ENCODE measurements at regions of chr2 and their contacts with region 1.

Region 1: GRCh38 chr2:11411768-11412448 is 54.1 kb downstream of the E2F6 start:
- DNase-seq: no peak
- H3K4me3 ChIP-seq: peak overlapping the region in 5 of 8 donors; percentile 8 to 64 (median 27)
- H3K27ac ChIP-seq: peak overlapping the region in 1 of 8 donors; percentile 28
- H3K4me1 ChIP-seq: peaks cover 0 to 18% (median 8%) of the 10 kb centered on the region in 6 donors
- H3K27me3 ChIP-seq: peaks cover 0 to 12% (median 0%) of the 10 kb centered on the region in 7 donors
- CTCF ChIP-seq: peak; percentile 38 to 79 (median 68)
- POLR2A ChIP-seq: no peak

Region 2: DNA sequence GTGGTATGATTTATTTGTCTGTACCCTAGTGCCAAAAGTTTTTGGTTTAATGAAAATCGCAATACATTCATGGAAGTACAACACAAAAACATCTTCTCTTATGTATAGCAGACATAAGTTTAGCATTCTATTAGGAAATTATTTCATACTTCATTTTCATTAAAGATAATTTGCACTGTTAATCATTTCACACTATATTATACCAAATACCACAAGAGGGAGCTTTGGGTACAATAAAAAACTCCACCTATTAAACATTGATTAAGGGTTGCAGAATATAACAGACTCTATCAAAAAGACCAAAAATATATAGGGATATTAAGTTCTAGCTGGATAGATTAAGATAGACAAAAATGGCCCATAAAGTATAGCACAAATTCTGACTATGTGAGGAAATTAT is 177.6 kb before region 1 on chr2:
- intact Hi-C with region 1: loop called (anchors 10 kb)
- DNase-seq: no peak
- H3K4me3 ChIP-seq: no peak overlapping the region
- H3K27ac ChIP-seq: no peak overlapping the region
- H3K4me1 ChIP-seq: peaks cover 0 to 17% (median 4%) of the 10 kb centered on the region in 6 donors
- H3K27me3 ChIP-seq: no peaks in the 10 kb centered on the region
- CTCF ChIP-seq: peak in 9 of 11 experiments; percentile 24 to 53 (median 45)
- POLR2A ChIP-seq: no peak

Measured in spleen (tissue), 13 donors.